Panc1 (cell line): ENCODE measurements at regions of chr11 and their contacts with region 1.

Region 1: DNA sequence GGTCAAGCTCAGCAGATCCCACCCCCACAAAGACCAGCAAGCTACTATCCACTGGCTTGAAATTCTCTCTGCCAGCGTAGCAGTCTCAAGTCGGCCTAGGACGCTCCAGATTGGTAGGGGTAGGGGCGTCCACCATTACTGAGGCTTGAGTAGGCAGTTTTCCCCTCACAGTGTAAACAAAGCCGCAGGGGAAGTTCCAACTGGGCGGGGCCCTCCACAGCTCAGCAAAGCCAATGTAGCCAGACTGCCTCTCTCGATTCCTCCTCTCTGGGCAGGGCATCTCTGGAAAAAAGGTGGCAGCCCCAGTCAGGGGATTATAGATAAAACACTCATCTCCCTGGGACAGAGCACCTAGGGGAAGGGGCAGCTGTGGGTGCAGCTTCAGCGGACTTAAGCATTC is 1064.9 kb upstream of the TENM4 start:
- DNase-seq: no peak
- ATAC-seq: no peak
- H3K4me3 ChIP-seq: no peak overlapping the region
- H3K27ac ChIP-seq: no peak overlapping the region
- H3K4me1 ChIP-seq: no peaks in the 10 kb centered on the region
- H3K27me3 ChIP-seq: no peaks in the 10 kb centered on the region
- CTCF ChIP-seq: no peak

Region 2: GRCh38 chr11:80650966-80651365 is 145.2 kb after region 1 on chr11:
- CTCF ChIA-PET with region 1: no interaction called
- POLR2A ChIA-PET with region 1: no interaction called
- in situ Hi-C with region 1: no loop called
- intact Hi-C with region 1: no loop called
- DNase-seq: no peak
- ATAC-seq: no peak
- H3K4me3 ChIP-seq: no peak overlapping the region
- H3K27ac ChIP-seq: no peak overlapping the region
- H3K4me1 ChIP-seq: no peaks in the 10 kb centered on the region
- H3K27me3 ChIP-seq: no peaks in the 10 kb centered on the region
- CTCF ChIP-seq: no peak

Region 3: DNA sequence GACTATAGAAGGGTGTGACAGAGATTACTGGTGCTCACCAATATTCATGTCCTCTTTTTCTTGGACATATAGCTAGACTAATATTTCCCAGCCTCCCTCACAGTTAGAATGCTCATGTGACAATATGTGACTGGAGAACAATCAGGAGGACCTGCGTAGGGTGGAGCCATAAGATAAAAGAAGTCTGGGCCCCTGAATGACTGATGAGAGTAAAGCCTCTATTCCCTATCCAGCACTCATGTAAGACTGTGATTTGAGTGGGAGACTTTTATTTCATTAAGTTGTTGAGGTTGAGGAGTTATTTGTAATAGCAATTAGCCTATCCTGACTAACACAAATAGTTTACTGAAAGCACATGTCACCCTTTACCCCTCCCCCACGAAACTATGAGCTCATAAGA is 182.2 kb after region 1 on chr11:
- CTCF ChIA-PET with region 1: no interaction called
- POLR2A ChIA-PET with region 1: no interaction called
- in situ Hi-C with region 1: no loop called
- intact Hi-C with region 1: no loop called
- DNase-seq: no peak
- ATAC-seq: no peak
- H3K4me3 ChIP-seq: no peak overlapping the region
- H3K27ac ChIP-seq: no peak overlapping the region
- H3K4me1 ChIP-seq: no peaks in the 10 kb centered on the region
- H3K27me3 ChIP-seq: no peaks in the 10 kb centered on the region
- CTCF ChIP-seq: no peak

Region 4: DNA sequence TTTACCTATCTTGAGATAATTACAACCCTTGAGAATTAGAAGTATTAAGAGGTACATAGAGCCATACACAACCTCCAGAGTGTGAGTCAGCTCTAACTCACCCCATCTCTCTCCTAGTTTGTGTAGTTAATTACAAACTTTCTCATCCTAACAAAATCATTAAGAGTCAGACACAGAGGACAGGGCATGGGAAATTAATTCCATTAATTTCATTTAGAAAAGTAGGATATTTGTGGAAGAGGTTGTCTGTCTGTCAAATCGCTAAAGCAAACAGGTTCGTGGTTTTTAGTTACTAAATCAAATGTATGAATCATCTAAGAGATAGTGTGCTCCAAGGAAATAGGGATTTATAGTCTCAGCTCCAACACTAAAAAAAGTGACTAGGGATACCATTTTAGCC is 196.5 kb after region 1 on chr11:
- CTCF ChIA-PET with region 1: no interaction called
- POLR2A ChIA-PET with region 1: no interaction called
- in situ Hi-C with region 1: no loop called
- intact Hi-C with region 1: loop called (anchors 10 kb)
- DNase-seq: no peak
- ATAC-seq: no peak
- H3K4me3 ChIP-seq: no peak overlapping the region
- H3K27ac ChIP-seq: peak overlapping the region; percentile 82
- H3K4me1 ChIP-seq: peaks cover 23% of the 10 kb centered on the region
- H3K27me3 ChIP-seq: no peaks in the 10 kb centered on the region
- CTCF ChIP-seq: no peak